ENCODE measurements at regions of chr18 and their contacts with region 1.

Region 1: GRCh38 chr18:50819728-50820378 is at the start of gene MRO:
- DNase-seq: peak; percentile 83
- H3K4me3 Mint-ChIP-seq: no peak within 1 kb of the TSS
- H3K27ac Mint-ChIP-seq: no peak within 1 kb of the TSS
- H3K4me1 Mint-ChIP-seq: no peaks in the 10 kb centered on the region
- H3K27me3 Mint-ChIP-seq: peaks cover 6% of the 10 kb centered on the region
- total RNA-seq, gene MRO: not detected

Region 2: DNA sequence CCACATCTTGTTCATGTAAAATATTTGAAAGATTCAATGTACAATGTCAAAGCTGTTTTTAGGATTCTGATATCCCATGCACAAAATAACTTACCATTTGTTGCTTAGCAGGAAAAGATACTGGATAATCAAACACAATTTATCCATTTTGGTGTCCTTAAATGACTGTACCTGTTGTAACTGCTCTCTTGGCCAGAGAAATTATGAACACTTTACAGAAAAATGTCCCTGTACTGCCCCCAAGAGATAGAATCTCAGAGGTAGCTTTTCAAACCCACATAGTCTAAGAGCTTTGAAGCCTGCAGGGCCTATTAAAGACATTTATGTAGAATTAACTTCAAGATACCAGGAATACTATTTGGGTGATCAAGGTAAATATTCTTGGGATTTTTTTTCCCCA is 46.9 kb after region 1 on chr18:
- CTCF ChIA-PET with region 1: interaction called, 4 read pairs
- intact Hi-C with region 1: loop called (anchors 1 kb)
- DNase-seq: no peak
- H3K4me3 Mint-ChIP-seq: no peak overlapping the region
- H3K27ac Mint-ChIP-seq: no peak overlapping the region
- H3K4me1 Mint-ChIP-seq: no peaks in the 10 kb centered on the region
- H3K27me3 Mint-ChIP-seq: no peaks in the 10 kb centered on the region

Region 3: GRCh38 chr18:51235011-51235789 is 415.3 kb after region 1 on chr18:
- CTCF ChIA-PET with region 1: no interaction called
- intact Hi-C with region 1: no loop called
- DNase-seq: peak; percentile 74
- H3K4me3 Mint-ChIP-seq: no peak overlapping the region
- H3K27ac Mint-ChIP-seq: peak overlapping the region; percentile 68
- H3K4me1 Mint-ChIP-seq: peaks cover 20% of the 10 kb centered on the region
- H3K27me3 Mint-ChIP-seq: peaks cover 7% of the 10 kb centered on the region

Region 4: DNA sequence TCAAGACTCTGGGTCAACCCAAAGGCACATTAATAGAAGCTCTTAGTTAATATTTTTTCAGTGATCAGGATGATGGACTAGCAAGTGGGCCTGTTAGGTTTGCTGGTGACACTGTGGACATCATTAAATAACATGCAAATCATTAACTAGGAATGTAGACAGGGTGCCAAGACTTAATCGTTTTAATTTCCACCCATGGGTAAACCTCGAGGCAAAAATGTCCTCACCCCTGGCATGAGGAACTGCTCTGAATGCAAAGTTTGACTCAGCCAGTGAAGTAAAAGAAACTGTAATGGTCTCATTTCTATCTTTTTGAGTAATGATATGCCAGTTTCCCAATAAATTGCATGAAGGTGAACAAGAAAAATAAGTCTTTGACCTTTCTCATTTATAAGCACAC is 530.2 kb after region 1 on chr18:
- CTCF ChIA-PET with region 1: no interaction called
- intact Hi-C with region 1: no loop called
- DNase-seq: no peak
- H3K4me3 Mint-ChIP-seq: no peak overlapping the region
- H3K27ac Mint-ChIP-seq: no peak overlapping the region
- H3K4me1 Mint-ChIP-seq: no peaks in the 10 kb centered on the region
- H3K27me3 Mint-ChIP-seq: peaks cover 19% of the 10 kb centered on the region

Region 5: DNA sequence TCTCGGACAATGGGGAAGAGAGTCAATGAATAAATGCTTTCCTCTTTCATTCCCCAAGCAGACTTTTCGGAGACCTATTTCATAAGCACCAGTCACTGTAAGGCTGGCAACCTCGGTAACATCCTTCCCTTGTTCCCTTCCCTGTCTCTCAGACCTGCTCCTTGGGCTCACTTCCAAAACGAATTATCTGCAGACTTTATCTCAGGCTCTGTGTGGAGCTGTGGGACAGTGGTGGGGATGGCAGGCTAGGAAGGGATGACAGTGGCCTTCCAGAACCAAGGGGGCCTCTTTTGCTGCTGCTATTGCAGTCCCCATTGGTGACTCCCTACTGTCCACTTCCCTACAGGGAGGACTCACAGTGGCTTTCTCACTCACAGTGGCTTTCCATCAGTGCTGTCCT is 563.3 kb after region 1 on chr18:
- CTCF ChIA-PET with region 1: interaction called, 3 read pairs
- intact Hi-C with region 1: loop called (anchors 10 kb)
- DNase-seq: no peak
- H3K4me3 Mint-ChIP-seq: no peak overlapping the region
- H3K27ac Mint-ChIP-seq: no peak overlapping the region
- H3K4me1 Mint-ChIP-seq: no peaks in the 10 kb centered on the region
- H3K27me3 Mint-ChIP-seq: peaks cover 3% of the 10 kb centered on the region

Measured in activated naive CD4-positive, alpha-beta T cell treated with anti-CD3 and anti-CD28 coated beads for 36 hours (primary cell).